ENCODE measurements at regions of chr17 and their contacts with region 1.

Region 1: DNA sequence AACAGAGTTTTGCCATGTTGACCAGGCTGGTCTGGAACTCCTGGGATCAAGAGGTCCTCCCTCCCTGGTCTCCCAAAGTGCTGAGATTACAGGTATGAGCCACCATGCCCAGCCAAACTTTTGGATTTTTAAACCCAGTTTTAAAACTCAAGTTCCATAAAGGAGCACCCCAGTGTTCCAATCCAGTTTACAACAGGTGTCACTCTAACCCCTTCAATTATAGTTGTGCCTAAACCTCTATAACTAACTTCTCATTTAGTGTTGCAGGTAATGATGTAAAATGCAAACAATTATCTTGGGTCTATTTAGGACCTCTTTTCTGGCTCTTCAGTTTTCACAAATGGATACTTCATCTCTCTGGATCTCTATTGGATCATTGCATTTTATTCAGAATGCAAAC is 7.8 kb upstream of the ADAP2 start:
- DNase-seq: no peak
- ATAC-seq: no peak
- H3K4me3 Mint-ChIP-seq: no peak overlapping the region
- H3K27ac Mint-ChIP-seq: no peak overlapping the region
- H3K4me1 Mint-ChIP-seq: peaks cover 3% of the 10 kb centered on the region
- H3K27me3 Mint-ChIP-seq: no peaks in the 10 kb centered on the region
- CTCF ChIP-seq: no peak

Region 2: GRCh38 chr17:31061678-31062077 is 147.7 kb after region 1 on chr17:
- CTCF ChIA-PET with region 1: no interaction called
- POLR2A ChIA-PET with region 1: no interaction called
- intact Hi-C with region 1: loop called (anchors 2 kb)
- DNase-seq: no peak
- ATAC-seq: no peak
- H3K4me3 Mint-ChIP-seq: no peak overlapping the region
- H3K27ac Mint-ChIP-seq: no peak overlapping the region
- H3K4me1 Mint-ChIP-seq: peaks cover 5% of the 10 kb centered on the region
- H3K27me3 Mint-ChIP-seq: no peaks in the 10 kb centered on the region
- CTCF ChIP-seq: no peak

Region 3: GRCh38 chr17:31068291-31068690 is 154.3 kb after region 1 on chr17:
- CTCF ChIA-PET with region 1: interaction called, 3 read pairs
- POLR2A ChIA-PET with region 1: no interaction called
- intact Hi-C with region 1: loop called (anchors 1 kb)
- DNase-seq: peak; percentile 21
- ATAC-seq: peak; percentile 71
- H3K4me3 Mint-ChIP-seq: no peak overlapping the region
- H3K27ac Mint-ChIP-seq: no peak overlapping the region
- H3K4me1 Mint-ChIP-seq: no peaks in the 10 kb centered on the region
- H3K27me3 Mint-ChIP-seq: no peaks in the 10 kb centered on the region
- CTCF ChIP-seq: no peak

Region 4: DNA sequence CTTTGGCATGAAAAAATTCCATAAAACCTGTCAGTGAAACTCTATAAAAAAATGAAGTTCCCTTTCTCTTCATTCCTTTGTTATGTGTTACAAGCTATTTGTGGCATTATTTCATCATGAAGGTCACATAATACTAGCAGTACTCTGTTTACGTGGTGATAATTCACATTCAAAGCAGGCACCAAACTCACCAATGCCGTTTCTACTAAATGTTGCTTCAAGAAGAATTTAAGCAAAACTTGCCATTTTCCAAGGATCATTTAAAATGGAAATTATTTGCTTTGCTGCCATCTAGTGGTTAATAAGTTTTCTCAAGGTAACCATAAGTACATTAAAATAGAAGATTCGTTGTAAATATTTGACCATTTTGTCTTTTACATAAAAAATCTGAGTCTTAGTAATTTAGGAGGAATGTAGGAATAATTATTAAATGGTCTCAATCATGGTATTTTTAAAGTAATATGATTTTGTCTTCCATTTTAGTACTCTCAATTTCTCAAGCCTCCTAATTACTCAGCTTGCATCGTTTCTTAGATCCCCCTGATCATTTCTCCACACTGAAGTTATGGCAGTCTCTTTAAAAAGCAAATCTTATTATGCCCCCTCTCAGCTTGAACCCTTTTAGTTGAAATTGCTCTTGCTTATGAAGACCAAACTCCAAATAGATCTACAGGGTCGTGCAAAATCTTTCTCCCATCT is 302.2 kb after region 1 on chr17:
- CTCF ChIA-PET with region 1: interaction called, 3 read pairs
- POLR2A ChIA-PET with region 1: no interaction called
- intact Hi-C with region 1: loop called (anchors 1 kb)
- DNase-seq: no peak
- ATAC-seq: no peak
- H3K4me3 Mint-ChIP-seq: no peak overlapping the region
- H3K27ac Mint-ChIP-seq: no peak overlapping the region
- H3K4me1 Mint-ChIP-seq: no peaks in the 10 kb centered on the region
- H3K27me3 Mint-ChIP-seq: no peaks in the 10 kb centered on the region
- CTCF ChIP-seq: peak; percentile 72

Measured in activated B cell treated with CpG ODN at 0.5 μM for 24 hours (primary cell).